ENCODE measurements at regions of chr1 and their contacts with region 1.

Region 1: GRCh38 chr1:231272880-231273279 is 31.9 kb downstream of the GNPAT start:
- DNase-seq: no peak
- ATAC-seq: peak in 1 of 2 donors; percentile 80

Region 2: GRCh38 chr1:231091831-231092301 is 181.0 kb before region 1 on chr1:
- intact Hi-C with region 1: no loop called
- DNase-seq: no peak
- ATAC-seq: no peak

Region 3: GRCh38 chr1:231108516-231109302 is 164.2 kb before region 1 on chr1:
- intact Hi-C with region 1: no loop called
- DNase-seq: no peak
- ATAC-seq: no peak

Region 4: GRCh38 chr1:231337472-231338269 is 64.8 kb after region 1 on chr1 and contains the start of gene EXOC8:
- intact Hi-C with region 1: loop called in 1 of 2 experiments (anchors 5 kb)
- DNase-seq: peak; percentile 95
- ATAC-seq: peak; percentile 95 to 97
- total RNA-seq, gene EXOC8: 12.0 to 17.0 TPM